Posterior vena cava (tissue), 2 donors: ENCODE measurements at regions of chr6 and their contacts with region 1.

Region 1: GRCh38 chr6:151101161-151101820 is 138.5 kb upstream of the AKAP12 start:
- DNase-seq: no peak

Region 2: DNA sequence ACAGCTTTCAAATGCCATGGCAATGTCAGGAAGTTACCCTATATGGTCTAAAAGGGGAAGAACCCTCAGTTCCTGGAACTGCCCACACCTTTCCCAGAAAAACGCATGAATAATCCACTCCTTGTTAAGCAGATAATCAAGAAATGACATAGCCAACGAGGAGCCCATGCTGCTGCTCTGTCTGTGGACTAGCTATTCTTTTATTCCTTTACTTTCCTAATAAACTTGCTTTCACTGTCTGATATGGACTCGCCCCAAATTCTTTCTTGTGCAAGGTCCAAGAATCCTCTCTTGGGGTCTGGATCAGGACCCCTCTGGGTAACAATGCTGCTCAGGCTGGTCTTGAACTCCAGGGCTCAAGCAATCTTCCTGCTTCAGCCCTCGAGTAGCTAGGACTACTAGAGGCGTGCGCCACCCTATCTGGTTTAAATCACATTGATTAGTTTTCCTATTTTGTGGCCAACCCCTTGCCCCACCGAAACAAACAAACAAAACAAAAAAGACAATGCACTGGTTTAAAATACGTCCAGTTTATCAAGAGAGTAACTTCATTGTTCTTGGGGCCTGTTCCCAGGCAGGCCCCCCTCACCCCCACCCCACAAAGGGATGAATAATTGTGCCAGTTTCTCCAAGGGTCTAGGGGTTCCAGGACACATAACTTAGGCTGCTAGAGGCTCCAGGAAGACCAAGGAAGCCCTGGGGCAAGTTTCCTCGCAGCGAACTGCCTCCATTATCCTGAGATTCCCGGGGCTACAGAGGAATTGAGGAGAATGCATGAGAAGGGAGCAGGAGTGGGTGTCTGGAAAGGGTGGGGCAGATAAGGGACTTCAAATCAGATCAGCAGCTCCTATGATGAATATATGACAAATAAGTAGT is 128.3 kb after region 1 on chr6:
- intact Hi-C with region 1: loop called in 1 of 2 experiments (anchors 10 kb)
- DNase-seq: no peak